HepG2 (cell line): ENCODE measurements at regions of chr15 and their contacts with region 1.

Region 1: DNA sequence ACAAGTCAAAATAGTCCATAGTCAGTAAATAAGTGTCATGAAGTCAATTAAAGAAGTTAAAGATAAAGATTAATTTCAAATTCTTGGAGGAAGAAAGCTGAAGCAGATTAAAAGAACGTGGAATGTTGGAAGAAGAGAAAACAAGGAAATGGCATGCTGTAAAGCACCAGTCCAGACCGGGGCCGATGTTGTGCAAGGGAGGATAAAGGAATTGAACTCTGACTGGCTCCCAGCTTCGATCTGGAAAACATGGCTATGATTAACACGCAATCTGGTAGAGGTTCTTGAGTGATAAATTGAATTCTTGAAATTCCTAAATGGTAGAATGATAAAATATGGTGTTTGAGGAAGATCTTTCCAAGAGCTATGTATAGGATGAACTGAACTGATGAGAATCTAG is 194.4 kb downstream of the MEIS2 start:
- DNase-seq: no peak
- ATAC-seq: no peak
- H3K4me3 ChIP-seq: no peak overlapping the region
- H3K27ac ChIP-seq: no peak overlapping the region
- H3K4me1 ChIP-seq: peaks cover 25% of the 10 kb centered on the region
- H3K27me3 ChIP-seq: no peaks in the 10 kb centered on the region
- CTCF ChIP-seq: no peak
- EP300 ChIP-seq: no peak
- POLR2A ChIP-seq: no peak
- RAD21 ChIP-seq: no peak

Region 2: GRCh38 chr15:36866896-36867295 is 39.0 kb before region 1 on chr15:
- CTCF ChIA-PET with region 1: no interaction called
- POLR2A ChIA-PET with region 1: no interaction called
- in situ Hi-C with region 1: no loop called
- intact Hi-C with region 1: no loop called
- DNase-seq: no peak
- ATAC-seq: no peak
- H3K4me3 ChIP-seq: no peak overlapping the region
- H3K27ac ChIP-seq: no peak overlapping the region
- H3K4me1 ChIP-seq: no peaks in the 10 kb centered on the region
- H3K27me3 ChIP-seq: no peaks in the 10 kb centered on the region; a peak in 2 of 5 replicates
- CTCF ChIP-seq: no peak
- EP300 ChIP-seq: no peak
- POLR2A ChIP-seq: no peak
- RAD21 ChIP-seq: no peak

Region 3: GRCh38 chr15:36877796-36878683 is 27.9 kb before region 1 on chr15:
- CTCF ChIA-PET with region 1: no interaction called
- POLR2A ChIA-PET with region 1: no interaction called
- in situ Hi-C with region 1: no loop called
- intact Hi-C with region 1: no loop called
- DNase-seq: no peak
- ATAC-seq: no peak; the same call in 1 of the 3 replicates
- H3K4me3 ChIP-seq: no peak overlapping the region
- H3K27ac ChIP-seq: no peak overlapping the region
- H3K4me1 ChIP-seq: peaks cover 7% of the 10 kb centered on the region; the same call in 1 of the 2 replicates
- H3K27me3 ChIP-seq: peaks cover 7 to 51% of the 10 kb centered on the region in 2 experiments
- CTCF ChIP-seq: no peak
- EP300 ChIP-seq: no peak
- POLR2A ChIP-seq: no peak
- RAD21 ChIP-seq: no peak

Region 4: GRCh38 chr15:37019479-37020433 is 113.8 kb after region 1 on chr15:
- CTCF ChIA-PET with region 1: no interaction called
- POLR2A ChIA-PET with region 1: no interaction called
- in situ Hi-C with region 1: no loop called
- intact Hi-C with region 1: loop called (anchors 10 kb)
- DNase-seq: peak; percentile 83
- ATAC-seq: peak; percentile 96
- H3K4me3 ChIP-seq: peak overlapping the region; percentile 29 to 54 (median 32); a peak in 5 of 6 replicates
- H3K27ac ChIP-seq: peak overlapping the region; percentile 73
- H3K4me1 ChIP-seq: peaks cover 32% of the 10 kb centered on the region
- H3K27me3 ChIP-seq: no peaks in the 10 kb centered on the region; a peak in 1 of 5 replicates
- CTCF ChIP-seq: no peak
- EP300 ChIP-seq: peak in 1 of 2 experiments; percentile 49; a peak in 1 of 4 replicates
- POLR2A ChIP-seq: peak in 1 of 2 experiments; percentile 59; a peak in 2 of 4 replicates
- RAD21 ChIP-seq: no peak

Region 5: GRCh38 chr15:37142371-37142770 is 236.5 kb after region 1 on chr15:
- CTCF ChIA-PET with region 1: no interaction called
- POLR2A ChIA-PET with region 1: no interaction called
- in situ Hi-C with region 1: no loop called
- intact Hi-C with region 1: no loop called
- DNase-seq: no peak
- ATAC-seq: no peak
- H3K4me3 ChIP-seq: no peak overlapping the region
- H3K27ac ChIP-seq: no peak overlapping the region
- H3K4me1 ChIP-seq: no peaks in the 10 kb centered on the region
- H3K27me3 ChIP-seq: no peaks in the 10 kb centered on the region
- CTCF ChIP-seq: no peak
- EP300 ChIP-seq: no peak
- POLR2A ChIP-seq: no peak
- RAD21 ChIP-seq: no peak